Esophagus squamous epithelium (tissue), 5 donors: ENCODE measurements at regions of chr13 and their contacts with region 1.

Region 1: GRCh38 chr13:110705826-110706569 is at the start of gene CARS2:
- DNase-seq: peak; percentile 76
- H3K4me3 ChIP-seq: peak within 1 kb of the TSS; percentile 64 to 88 (median 80)
- H3K27ac ChIP-seq: peak within 1 kb of the TSS; percentile 87 to 95 (median 94)
- H3K4me1 ChIP-seq: peaks cover 16 to 55% (median 28%) of the 10 kb centered on the region in 3 donors
- H3K27me3 ChIP-seq: no peaks in the 10 kb centered on the region
- CTCF ChIP-seq: peak in 4 of 6 experiments; percentile 21 to 28 (median 22)
- POLR2A ChIP-seq: peak in 2 of 4 donors; percentile 73 to 83
- total RNA-seq, gene CARS2: 24.9 to 54.9 (median 33.5) TPM

Region 2: DNA sequence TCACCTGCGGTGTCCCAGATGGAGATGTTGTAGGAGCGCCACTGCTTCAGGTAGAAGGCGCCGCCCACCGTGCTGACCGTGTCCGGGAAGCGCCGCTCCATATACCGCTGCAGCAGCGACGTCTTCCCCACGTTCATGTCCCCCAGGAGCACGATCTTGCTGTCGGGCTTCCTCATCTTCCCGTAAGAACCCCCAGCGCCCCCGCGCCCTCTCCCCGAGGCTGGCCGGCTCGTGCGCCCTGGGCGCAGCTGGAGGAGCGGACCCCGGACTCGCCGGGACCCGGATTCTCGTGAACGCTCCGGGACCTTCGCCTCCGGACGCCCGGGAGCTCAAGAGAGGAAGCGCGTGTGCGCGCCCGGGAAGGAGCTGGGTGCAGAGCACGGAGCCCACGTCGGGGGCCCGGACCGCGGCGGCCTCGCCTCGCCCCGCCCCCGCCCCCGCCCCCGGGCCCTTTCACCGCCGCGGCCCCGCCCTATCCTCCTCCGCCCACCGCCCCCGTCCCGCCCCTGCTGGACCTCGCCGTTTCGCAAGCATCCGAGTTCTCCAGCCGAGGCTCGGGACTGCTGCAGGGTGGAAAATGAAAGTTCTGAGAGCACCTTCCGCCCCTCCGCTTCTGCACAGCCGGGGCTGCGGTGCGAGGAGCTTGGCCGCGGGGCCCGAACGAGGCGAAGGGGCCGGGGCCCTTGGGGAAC is 144.5 kb before region 1 on chr13 and contains the start of gene RAB20:
- intact Hi-C with region 1: no loop called
- DNase-seq: peak; percentile 58
- H3K4me3 ChIP-seq: peak within 1 kb of the TSS; percentile 64 to 86 (median 76)
- H3K27ac ChIP-seq: peak within 1 kb of the TSS; percentile 80 to 95 (median 88)
- H3K4me1 ChIP-seq: peaks cover 14 to 46% (median 17%) of the 10 kb centered on the region in 3 donors
- H3K27me3 ChIP-seq: peaks cover 0 to 12% (median 0%) of the 10 kb centered on the region in 4 donors
- CTCF ChIP-seq: no peak
- POLR2A ChIP-seq: peak in 2 of 4 donors; percentile 50 to 72
- total RNA-seq, gene RAB20: 1.3 to 7.2 (median 4.3) TPM

Region 3: DNA sequence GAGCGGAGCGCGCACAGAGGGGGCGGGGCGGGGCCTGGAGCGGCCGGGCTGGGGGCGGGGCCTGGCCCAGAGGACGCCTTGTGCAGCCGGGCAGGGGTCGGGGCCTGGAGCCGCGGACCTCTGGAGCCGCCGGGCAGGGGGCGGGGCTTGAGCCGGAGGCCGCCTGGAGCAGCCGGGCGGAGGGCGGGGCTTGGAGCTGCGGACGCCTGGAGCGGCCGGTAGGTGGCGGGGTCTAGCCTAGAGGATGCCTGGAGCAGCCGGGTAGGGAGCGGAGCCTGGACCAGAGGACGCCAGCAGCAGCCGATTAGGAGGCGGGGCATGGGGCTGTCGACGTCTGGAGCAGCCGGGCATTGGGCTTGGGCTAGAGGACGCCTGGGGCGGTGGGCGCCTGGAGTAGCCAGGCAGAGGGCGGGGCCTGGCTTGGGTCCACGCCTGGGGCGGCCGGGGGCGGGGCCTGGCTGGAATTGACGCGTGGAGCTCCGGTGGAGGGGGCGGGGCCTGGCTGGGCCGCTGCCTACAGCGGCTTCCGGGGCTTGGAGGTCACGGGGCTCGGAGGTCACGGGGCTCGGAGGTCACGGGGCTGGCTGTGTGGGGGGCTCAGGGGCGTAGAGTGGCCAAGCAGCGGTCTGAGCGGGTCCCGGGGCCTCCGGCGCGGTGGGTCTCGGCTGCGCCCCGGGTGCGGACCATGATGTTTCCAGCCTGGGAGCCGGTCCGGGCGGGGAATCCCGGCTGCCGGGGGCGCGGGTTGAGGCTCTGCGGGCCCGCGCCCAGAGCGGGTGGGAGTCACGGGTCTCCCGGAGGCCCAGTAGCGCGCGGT is 209.3 kb after region 1 on chr13 and contains the start of gene ANKRD10:
- intact Hi-C with region 1: loop called (anchors 10 kb)
- DNase-seq: peak; percentile 96
- H3K4me3 ChIP-seq: peak within 1 kb of the TSS; percentile 75 to 96 (median 88)
- H3K27ac ChIP-seq: peak within 1 kb of the TSS; percentile 96 to 99 (median 97)
- H3K4me1 ChIP-seq: peaks cover 13 to 56% (median 27%) of the 10 kb centered on the region in 3 donors
- H3K27me3 ChIP-seq: peaks cover 0 to 5% (median 0%) of the 10 kb centered on the region in 4 donors
- CTCF ChIP-seq: peak; percentile 72 to 97 (median 90)
- POLR2A ChIP-seq: peak in 2 of 4 donors; percentile 23 to 66
- total RNA-seq, gene ANKRD10: 19.3 to 62.9 (median 29.4) TPM